Activated B cell treated with CpG ODN at 0.5 μM for 24 hours (primary cell): ENCODE measurements at regions of chr3 and their contacts with region 1.

Region 1: GRCh38 chr3:184874709-184875644 is 63.0 kb downstream of the VPS8 start:
- DNase-seq: no peak
- ATAC-seq: no peak
- H3K4me3 Mint-ChIP-seq: no peak overlapping the region
- H3K27ac Mint-ChIP-seq: no peak overlapping the region
- H3K4me1 Mint-ChIP-seq: no peaks in the 10 kb centered on the region
- H3K27me3 Mint-ChIP-seq: no peaks in the 10 kb centered on the region
- CTCF ChIP-seq: peak; percentile 28

Region 2: DNA sequence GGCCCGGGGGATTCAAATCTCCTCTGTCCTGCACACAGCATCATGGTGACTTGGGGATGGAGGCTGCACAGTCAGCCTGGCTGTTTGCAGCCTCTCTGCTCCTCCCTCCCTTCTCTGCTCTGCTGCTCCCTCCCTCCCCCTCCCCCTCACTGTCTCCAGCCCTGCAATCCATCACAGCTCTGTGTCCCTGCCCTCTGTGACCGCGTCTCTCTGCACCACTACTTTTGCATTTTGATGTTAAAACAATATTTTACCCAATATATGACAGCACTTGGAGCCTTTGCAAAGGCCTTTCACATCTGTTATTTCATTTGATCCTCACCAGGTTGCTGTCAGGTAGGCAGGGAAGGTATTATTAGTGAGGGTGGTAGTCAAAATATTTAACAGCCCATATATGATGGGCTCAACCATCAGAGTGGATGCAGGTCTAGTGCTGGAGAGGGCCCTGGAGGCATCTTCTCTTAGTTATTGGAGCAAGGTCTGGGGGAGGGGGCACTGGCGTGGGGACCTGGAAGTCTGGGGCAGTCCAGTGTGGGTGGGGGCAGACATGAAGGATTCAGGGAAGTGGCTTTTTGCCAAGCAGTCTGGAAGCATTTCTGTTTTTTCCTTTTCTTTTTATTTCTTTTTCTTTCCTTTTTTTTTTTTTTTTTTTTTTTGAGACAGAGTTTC is 79.3 kb before region 1 on chr3:
- CTCF ChIA-PET with region 1: no interaction called
- POLR2A ChIA-PET with region 1: no interaction called
- intact Hi-C with region 1: no loop called
- DNase-seq: no peak
- ATAC-seq: no peak
- H3K4me3 Mint-ChIP-seq: no peak overlapping the region
- H3K27ac Mint-ChIP-seq: no peak overlapping the region
- H3K4me1 Mint-ChIP-seq: no peaks in the 10 kb centered on the region
- H3K27me3 Mint-ChIP-seq: peaks cover 29% of the 10 kb centered on the region
- CTCF ChIP-seq: no peak

Region 3: GRCh38 chr3:185215873-185216606 is 341.1 kb after region 1 on chr3:
- CTCF ChIA-PET with region 1: no interaction called
- POLR2A ChIA-PET with region 1: no interaction called
- intact Hi-C with region 1: loop called (anchors 2 kb)
- DNase-seq: no peak
- ATAC-seq: no peak
- H3K4me3 Mint-ChIP-seq: no peak overlapping the region
- H3K27ac Mint-ChIP-seq: no peak overlapping the region
- H3K4me1 Mint-ChIP-seq: no peaks in the 10 kb centered on the region
- H3K27me3 Mint-ChIP-seq: no peaks in the 10 kb centered on the region
- CTCF ChIP-seq: no peak